GM10248 (cell line): ENCODE measurements at regions of chr4 and their contacts with region 1.

Region 1: GRCh38 chr4:7042697-7043464 is at the start of gene TADA2B:
- DNase-seq: peak; percentile 99
- CTCF ChIP-seq: peak; percentile 70

Region 2: GRCh38 chr4:6909073-6909965 is 133.6 kb before region 1 on chr4 and contains the start of gene TBC1D14:
- CTCF ChIA-PET with region 1: interaction called, 11 read pairs
- POLR2A ChIA-PET with region 1: no interaction called
- DNase-seq: peak; percentile 96
- CTCF ChIP-seq: no peak

Region 3: DNA sequence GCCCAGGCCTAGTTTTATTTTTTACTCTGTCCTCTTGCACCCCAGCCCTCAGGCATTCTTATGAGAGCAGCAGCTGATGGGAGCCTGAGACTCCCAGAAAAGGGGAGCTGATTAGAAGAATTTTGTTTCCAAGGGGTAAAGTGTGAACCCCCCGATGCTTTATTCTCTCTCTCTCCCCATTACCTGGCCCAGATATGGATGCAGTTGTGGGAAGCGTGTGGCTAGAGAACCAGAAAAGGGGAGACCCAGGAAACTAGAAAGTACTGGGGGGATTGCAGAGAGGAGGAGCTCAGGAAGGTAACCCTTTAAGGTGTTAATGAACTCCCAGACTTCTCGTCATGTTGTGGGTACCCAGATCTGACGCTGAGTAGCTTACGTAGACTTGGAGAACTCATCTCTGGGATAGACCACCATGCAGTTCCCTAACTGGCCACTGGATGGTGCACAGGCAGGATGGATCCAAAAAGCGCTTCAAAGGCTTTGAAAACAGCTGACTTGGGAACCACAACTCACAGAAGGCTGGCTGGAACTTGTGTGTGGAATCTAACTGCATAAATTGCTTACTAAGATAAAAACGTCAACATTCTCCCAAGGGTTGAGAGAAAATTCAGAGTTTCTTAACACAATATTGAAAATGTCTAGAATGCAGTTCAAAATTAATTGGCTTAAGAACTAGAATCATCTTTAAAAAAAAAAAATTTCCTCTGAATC is 68.6 kb before region 1 on chr4:
- CTCF ChIA-PET with region 1: interaction called, 18 read pairs
- POLR2A ChIA-PET with region 1: no interaction called
- DNase-seq: peak; percentile 74
- CTCF ChIP-seq: peak; percentile 75

Region 4: DNA sequence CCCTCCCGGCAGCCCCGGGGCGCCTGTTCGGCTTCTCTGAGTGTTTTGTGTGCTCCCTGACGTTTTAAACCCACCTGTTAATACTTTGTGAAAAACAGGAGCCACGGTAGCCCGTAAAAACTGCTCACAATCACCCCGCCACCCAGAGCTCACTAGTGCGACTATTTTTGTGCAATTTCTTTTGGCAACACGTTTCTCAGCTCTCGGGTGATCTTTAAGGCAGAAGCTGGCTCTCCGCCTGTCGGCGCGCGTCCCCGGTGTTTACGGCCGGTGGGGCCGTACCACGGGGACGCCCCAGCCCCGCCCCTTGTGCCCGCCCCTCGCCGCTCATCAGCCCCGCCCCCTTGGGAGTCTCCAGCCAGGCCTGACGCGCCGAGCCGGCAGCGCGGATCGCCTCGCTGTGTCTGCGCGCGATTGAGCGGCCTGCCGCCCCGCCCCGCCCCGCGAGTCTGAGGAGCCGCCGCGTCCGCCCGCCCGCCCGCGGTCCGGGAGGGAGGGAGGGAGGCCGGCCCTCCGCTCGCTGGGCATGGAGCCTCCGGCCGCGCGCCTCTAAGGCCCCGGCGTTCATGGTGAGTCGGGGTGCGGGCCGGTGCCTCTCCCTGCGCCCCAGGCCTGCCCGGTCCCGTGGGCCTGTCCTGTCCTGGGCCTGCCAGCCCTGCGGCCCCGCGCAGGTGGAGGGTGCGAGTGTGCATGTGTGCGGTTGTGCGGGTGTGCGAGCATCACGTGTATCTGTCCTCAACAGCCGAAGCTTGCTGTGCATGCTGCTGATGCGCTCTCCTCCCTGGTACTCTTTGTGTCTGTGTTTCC is 55.9 kb before region 1 on chr4:
- CTCF ChIA-PET with region 1: interaction called, 12 read pairs
- POLR2A ChIA-PET with region 1: no interaction called
- DNase-seq: peak; percentile 99
- CTCF ChIP-seq: no peak

Region 5: GRCh38 chr4:7017446-7018330 is 25.2 kb before region 1 on chr4:
- CTCF ChIA-PET with region 1: interaction called, 41 read pairs
- POLR2A ChIA-PET with region 1: no interaction called
- DNase-seq: no peak
- CTCF ChIP-seq: no peak

Region 6: GRCh38 chr4:7031526-7032449 is 11.1 kb before region 1 on chr4:
- CTCF ChIA-PET with region 1: interaction called, 16 read pairs
- POLR2A ChIA-PET with region 1: no interaction called
- DNase-seq: no peak
- CTCF ChIP-seq: no peak

Region 7: GRCh38 chr4:7052923-7053715 is 10.2 kb after region 1 on chr4:
- CTCF ChIA-PET with region 1: interaction called, 51 read pairs
- POLR2A ChIA-PET with region 1: no interaction called
- DNase-seq: no peak
- CTCF ChIP-seq: no peak